ENCODE measurements at regions of chr3 and their contacts with region 1.

Region 1: DNA sequence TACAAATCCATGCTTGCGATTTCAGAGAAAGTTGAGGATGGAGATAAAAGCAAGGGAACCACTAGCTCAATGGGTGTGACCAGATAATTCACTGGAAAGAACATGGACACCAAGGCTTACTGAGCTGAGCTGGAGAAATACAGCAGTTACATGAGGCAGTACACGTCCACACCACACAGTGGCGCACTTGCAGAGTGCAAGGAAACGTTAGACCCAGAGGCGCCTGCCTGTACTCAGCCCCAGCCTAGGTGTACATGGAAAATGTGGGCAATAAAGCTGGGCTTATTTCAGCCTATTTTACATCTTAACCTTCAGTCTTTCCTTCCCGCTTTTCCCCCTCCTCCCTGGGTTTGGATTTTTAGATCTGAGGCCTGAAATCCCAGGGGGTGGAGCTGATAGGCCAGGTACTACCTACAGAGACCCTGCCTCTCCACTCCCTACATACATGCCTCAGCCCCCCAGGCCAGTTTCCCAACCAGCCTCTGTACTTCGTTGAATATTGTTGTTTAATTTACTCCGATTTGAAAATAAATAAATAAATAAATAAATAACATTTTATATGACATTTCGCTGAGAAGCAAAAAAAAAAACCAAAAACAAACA is 60.1 kb downstream of the PCOLCE2 start:
- DNase-seq: peak; percentile 67 to 87 (median 75)
- ATAC-seq: peak; percentile 78 to 97 (median 96)
- H3K4me3 ChIP-seq: no peak overlapping the region
- H3K27ac ChIP-seq: no peak overlapping the region
- H3K4me1 ChIP-seq: peaks cover 0 to 5% (median 0%) of the 10 kb centered on the region in 12 donors
- H3K27me3 ChIP-seq: no peaks in the 10 kb centered on the region
- CTCF ChIP-seq: peak; percentile 74 to 84 (median 80)
- POLR2A ChIP-seq: no peak

Region 2: DNA sequence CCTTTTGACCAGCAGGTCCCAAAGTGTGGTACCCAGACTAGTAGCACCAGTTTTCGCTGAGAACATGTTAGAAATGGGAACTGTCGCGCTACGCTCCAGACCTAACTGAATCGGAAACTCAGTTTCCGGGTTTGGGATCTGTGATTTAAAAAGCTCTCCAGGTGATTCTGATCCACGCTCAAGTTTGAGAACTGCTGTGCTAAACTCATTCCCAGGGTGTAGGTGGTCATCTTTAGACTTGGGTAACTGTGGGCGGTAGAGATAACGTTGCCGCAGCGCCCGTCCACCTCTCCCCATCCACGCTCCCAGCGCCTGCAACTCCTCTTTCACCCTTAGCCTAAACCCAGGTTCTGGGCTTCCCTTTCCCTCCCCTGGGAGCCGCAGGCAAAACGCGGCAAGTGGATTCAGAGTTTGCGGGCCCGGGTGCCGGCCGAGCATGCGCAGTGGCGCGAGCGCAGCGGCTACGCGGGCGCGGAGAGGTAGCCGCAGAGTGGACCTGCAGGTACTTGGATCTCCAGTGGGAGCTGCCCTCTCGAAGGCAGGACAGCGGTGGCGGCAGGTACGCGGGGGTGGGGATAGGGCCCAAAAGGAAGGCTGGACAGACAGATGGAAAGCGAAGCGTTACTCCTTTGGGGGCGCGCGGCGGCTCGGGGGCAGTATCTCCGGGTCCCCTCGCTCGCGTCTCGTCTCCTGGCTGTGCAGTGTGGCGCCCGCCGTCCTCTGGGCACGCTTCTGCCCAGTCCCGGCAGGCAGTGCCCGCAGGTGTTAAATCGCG is 232.7 kb before region 1 on chr3 and contains the start of gene PLS1:
- intact Hi-C with region 1: loop called in 1 of 10 experiments (anchors 10 kb)
- DNase-seq: peak; percentile 76 to 92 (median 84)
- ATAC-seq: peak; percentile 89 to 97 (median 97)
- H3K4me3 ChIP-seq: peak within 1 kb of the TSS; percentile 61 to 86 (median 72)
- H3K27ac ChIP-seq: peak within 1 kb of the TSS in 11 of 12 donors; percentile 11 to 70 (median 46)
- H3K4me1 ChIP-seq: peaks cover 0 to 17% (median 4%) of the 10 kb centered on the region in 12 donors
- H3K27me3 ChIP-seq: no peaks in the 10 kb centered on the region
- CTCF ChIP-seq: no peak
- POLR2A ChIP-seq: peak in 1 of 2 donors; percentile 70
- total RNA-seq, gene PLS1: 0.99 to 3.7 (median 1.7) TPM

Region 3: DNA sequence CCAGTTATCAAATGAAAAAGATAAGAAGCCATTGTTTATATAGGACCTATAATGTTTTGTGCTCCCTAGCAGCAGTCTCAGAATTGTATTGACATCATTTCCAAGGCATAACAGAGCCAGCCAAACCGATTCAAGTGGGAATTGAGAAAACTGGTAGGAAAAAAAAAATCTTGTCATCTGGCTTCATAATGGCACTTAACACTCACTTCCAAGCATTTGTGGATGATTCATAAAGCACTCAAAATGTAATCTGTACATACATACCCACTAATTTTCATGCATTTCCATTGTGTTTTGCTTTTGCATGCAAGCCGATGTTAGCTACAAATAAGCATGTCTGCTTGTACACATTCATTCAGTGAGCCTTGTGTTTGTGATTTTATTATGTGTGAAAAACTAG is 123.6 kb before region 1 on chr3:
- intact Hi-C with region 1: no loop called
- DNase-seq: no peak
- ATAC-seq: no peak
- H3K4me3 ChIP-seq: no peak overlapping the region
- H3K27ac ChIP-seq: no peak overlapping the region
- H3K4me1 ChIP-seq: no peaks in the 10 kb centered on the region
- H3K27me3 ChIP-seq: no peaks in the 10 kb centered on the region
- CTCF ChIP-seq: no peak
- POLR2A ChIP-seq: no peak